ENCODE measurements at regions of chr16 and their contacts with region 1.

Region 1: DNA sequence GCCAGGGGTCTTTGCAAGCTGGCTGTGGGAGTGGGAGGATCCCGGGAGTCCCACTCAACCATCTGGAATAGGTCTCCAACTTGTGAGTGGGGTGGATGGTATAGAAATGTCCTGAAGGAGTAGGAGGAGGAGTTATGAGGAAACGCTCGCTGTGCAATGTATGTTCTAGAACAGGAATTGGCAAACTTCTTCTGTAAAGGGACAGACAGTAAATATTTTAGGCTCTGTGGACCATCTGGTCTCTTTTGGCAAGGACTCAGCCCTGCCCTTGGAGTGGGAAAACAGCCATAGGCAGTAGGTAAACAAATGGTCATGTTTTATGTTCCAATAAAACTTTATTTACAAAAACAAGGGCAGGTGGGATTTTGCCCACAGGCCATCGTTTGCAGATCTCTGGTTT is 149.2 kb downstream of the NPIPB5 start:
- DNase-seq: peak in 1 of 3 donors; percentile 18
- ATAC-seq: no peak
- H3K4me3 ChIP-seq: no peak overlapping the region
- H3K27ac ChIP-seq: no peak overlapping the region
- H3K4me1 ChIP-seq: no peaks in the 10 kb centered on the region
- H3K27me3 ChIP-seq: no peaks in the 10 kb centered on the region
- CTCF ChIP-seq: no peak
- POLR2A ChIP-seq: no peak

Region 2: GRCh38 chr16:22318690-22319358 is 341.1 kb before region 1 on chr16:
- intact Hi-C with region 1: loop called in 1 of 2 experiments (anchors 10 kb)
- DNase-seq: peak in 2 of 3 donors; percentile 43 to 51
- ATAC-seq: peak; percentile 32 to 53 (median 47)
- H3K4me3 ChIP-seq: no peak overlapping the region
- H3K27ac ChIP-seq: no peak overlapping the region
- H3K4me1 ChIP-seq: no peaks in the 10 kb centered on the region
- H3K27me3 ChIP-seq: no peaks in the 10 kb centered on the region
- CTCF ChIP-seq: peak; percentile 39 to 64 (median 60)
- POLR2A ChIP-seq: no peak

Region 3: DNA sequence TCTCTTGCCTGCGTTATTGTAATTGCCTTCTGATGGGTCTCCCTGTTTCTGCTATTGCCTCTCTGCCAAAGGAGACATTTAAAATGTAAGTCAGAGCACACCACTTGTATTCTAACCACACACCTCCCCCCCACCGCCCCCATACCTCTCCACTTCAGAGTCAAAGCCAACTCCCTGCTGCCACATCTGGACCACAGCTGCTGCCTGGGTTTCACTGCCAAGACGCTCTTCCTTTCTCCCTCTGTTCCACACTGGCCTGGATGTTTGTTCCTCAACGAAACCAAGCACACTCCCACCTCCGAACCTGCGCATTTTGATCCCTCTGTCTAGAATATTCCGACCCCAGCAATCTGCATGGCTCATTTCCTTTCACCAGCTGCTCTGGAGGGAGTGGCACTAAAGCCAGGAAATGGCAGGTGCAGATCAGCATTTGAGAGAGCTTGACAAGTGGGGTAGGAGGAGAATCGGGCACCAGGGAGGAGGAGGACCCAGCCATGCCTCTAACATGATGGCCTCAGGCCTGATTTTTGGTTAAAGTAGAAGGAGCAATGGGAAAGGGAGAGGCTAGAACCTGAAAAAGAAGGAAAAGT is 61.7 kb after region 1 on chr16:
- intact Hi-C with region 1: no loop called
- DNase-seq: no peak
- ATAC-seq: no peak
- H3K4me3 ChIP-seq: no peak overlapping the region
- H3K27ac ChIP-seq: no peak overlapping the region
- H3K4me1 ChIP-seq: no peaks in the 10 kb centered on the region
- H3K27me3 ChIP-seq: no peaks in the 10 kb centered on the region
- CTCF ChIP-seq: no peak
- POLR2A ChIP-seq: no peak

Region 4: GRCh38 chr16:22743401-22743800 is 83.5 kb after region 1 on chr16:
- intact Hi-C with region 1: no loop called
- DNase-seq: no peak
- ATAC-seq: no peak
- H3K4me3 ChIP-seq: no peak overlapping the region
- H3K27ac ChIP-seq: no peak overlapping the region
- H3K4me1 ChIP-seq: no peaks in the 10 kb centered on the region
- H3K27me3 ChIP-seq: no peaks in the 10 kb centered on the region
- CTCF ChIP-seq: no peak
- POLR2A ChIP-seq: no peak